RWPE1 (cell line): ENCODE measurements at regions of chr5 and their contacts with region 1.

Region 1: GRCh38 chr5:57499262-57500050 is 16.8 kb upstream of the ACTBL2 start:
- DNase-seq: peak; percentile 65
- H3K27ac ChIP-seq: no peak overlapping the region
- CTCF ChIP-seq: peak; percentile 93

Region 2: GRCh38 chr5:57007344-57007743 is 492.1 kb before region 1 on chr5:
- CTCF ChIA-PET with region 1: no interaction called
- POLR2A ChIA-PET with region 1: no interaction called
- DNase-seq: no peak
- H3K27ac ChIP-seq: no peak overlapping the region
- CTCF ChIP-seq: no peak

Region 3: GRCh38 chr5:57298295-57298984 is 201.0 kb before region 1 on chr5:
- CTCF ChIA-PET with region 1: interaction called, 24 read pairs
- POLR2A ChIA-PET with region 1: no interaction called
- DNase-seq: peak; percentile 76
- H3K27ac ChIP-seq: no peak overlapping the region
- CTCF ChIP-seq: peak; percentile 92

Region 4: GRCh38 chr5:57779383-57780223 is 280.1 kb after region 1 on chr5:
- CTCF ChIA-PET with region 1: interaction called, 18 read pairs
- POLR2A ChIA-PET with region 1: no interaction called
- DNase-seq: peak; percentile 66
- H3K27ac ChIP-seq: peak overlapping the region; percentile 43; the same call in 1 of the 2 replicates
- CTCF ChIP-seq: peak; percentile 82

Region 5: GRCh38 chr5:57791875-57792274 is 292.4 kb after region 1 on chr5:
- CTCF ChIA-PET with region 1: no interaction called
- POLR2A ChIA-PET with region 1: interaction called, 10 read pairs
- DNase-seq: no peak
- H3K27ac ChIP-seq: no peak overlapping the region
- CTCF ChIP-seq: no peak

Region 6: GRCh38 chr5:57887851-57888621 is 388.6 kb after region 1 on chr5:
- CTCF ChIA-PET with region 1: interaction called, 14 read pairs
- POLR2A ChIA-PET with region 1: no interaction called
- DNase-seq: peak; percentile 87
- H3K27ac ChIP-seq: peak overlapping the region; percentile 42; the same call in 1 of the 2 replicates
- CTCF ChIP-seq: peak; percentile 90

Region 7: GRCh38 chr5:58460732-58461286 is 961.4 kb after region 1 on chr5:
- CTCF ChIA-PET with region 1: interaction called, 21 read pairs
- POLR2A ChIA-PET with region 1: no interaction called
- DNase-seq: peak; percentile 87
- H3K27ac ChIP-seq: peak overlapping the region; percentile 94
- CTCF ChIP-seq: peak; percentile 89